ENCODE measurements at regions of chr4 and their contacts with region 1.

Region 1: DNA sequence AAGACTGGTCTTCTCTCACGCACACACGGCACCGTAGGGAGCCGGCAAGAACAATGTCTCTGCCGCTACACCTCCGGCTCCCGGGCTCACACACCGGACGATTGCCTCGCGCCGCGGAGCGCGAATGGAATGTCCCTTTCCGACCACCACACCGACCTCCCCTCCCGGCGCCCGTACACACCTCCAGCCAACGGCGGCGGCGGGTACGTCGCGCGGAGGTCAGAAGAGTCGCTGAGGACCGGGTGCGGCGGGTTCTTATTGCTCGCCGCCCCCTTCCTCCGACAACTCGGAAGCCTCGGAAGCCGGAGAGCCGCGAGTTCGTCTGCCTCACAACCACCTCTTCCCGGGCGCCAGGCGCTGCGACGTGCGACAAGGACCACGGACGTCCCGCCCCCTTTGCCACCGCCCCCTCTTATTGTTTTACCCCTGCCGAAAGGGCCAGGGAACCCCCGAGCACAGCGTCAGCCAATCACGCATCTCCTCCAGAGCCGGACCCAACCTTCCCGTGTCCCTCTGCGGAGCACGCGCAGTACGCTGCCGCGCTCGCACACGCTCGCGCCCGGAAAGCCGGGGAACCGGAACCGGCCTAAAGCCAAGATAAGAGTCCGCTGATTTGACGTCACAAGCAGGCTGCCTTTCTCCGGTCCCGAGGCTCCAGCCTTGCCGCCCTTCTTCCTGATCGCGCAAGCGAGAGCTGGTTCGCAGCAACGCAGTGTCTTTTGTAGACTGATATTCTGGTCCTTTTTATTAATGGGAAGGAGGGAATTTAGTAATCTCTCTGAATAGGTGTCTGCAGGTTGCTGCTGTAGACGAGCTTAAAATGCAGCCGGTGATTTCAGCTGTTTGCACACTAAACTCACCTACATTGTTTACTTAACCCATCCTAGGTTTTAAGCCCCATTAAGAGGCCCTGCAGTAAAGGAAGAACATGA is at the start of gene G3BP2:
- DNase-seq: peak; percentile 97
- H3K4me3 Mint-ChIP-seq: peak within 1 kb of the TSS; percentile 93
- H3K27ac Mint-ChIP-seq: peak within 1 kb of the TSS; percentile 92
- H3K4me1 Mint-ChIP-seq: peaks cover 27% of the 10 kb centered on the region
- H3K27me3 Mint-ChIP-seq: no peaks in the 10 kb centered on the region
- CTCF ChIP-seq: no peak
- total RNA-seq, gene G3BP2: 179 and 231 TPM in 2 replicates

Region 2: DNA sequence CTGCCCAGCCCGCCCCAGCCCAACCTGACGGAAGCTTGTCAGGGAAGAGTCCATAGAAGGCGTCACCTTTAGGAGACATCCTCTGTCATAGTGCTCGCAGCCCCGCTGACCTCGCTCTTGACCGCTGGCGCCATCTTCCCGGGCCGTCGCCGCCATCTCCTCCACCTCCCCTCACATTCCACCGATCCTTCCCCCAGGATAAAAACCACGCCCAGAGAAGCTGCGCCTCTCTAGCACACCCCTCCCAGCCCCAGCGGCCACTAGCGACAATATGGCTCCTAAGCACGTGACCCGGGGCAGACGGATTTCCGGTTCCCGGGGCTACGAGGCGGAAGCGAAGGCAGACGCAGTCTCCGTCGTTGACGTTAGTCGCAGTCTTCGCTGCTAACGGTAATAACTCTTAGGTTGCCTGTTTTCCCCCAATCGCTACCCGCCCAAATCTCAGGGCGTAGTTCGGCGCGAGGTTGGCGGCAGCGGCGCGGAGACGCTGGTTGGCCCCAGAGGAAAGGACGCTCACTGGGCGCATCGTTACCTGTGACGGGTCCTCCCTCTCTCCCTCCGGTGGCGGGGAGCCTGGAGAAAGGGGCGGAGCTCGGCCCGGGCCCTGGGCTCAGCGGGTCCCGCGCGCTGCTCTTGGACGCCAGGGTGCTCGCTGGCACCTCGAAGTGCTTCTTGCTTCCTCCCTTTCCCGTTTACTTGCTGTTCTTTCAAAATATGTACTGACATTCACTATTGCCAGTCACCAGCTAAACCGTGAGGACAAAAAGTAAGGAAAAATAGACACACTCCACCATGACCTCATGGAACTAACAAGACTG is 159.0 kb before region 1 on chr4 and contains the starts of genes RCHY1 and THAP6:
- CTCF ChIA-PET with region 1: no interaction called
- POLR2A ChIA-PET with region 1: interaction called, 43 read pairs
- intact Hi-C with region 1: no loop called
- DNase-seq: peak; percentile 98
- H3K4me3 Mint-ChIP-seq: no peak within 1 kb of the TSS
- H3K27ac Mint-ChIP-seq: no peak within 1 kb of the TSS
- H3K4me1 Mint-ChIP-seq: peaks cover 33% of the 10 kb centered on the region
- H3K27me3 Mint-ChIP-seq: no peaks in the 10 kb centered on the region
- CTCF ChIP-seq: no peak
- total RNA-seq, gene RCHY1: 29.1 and 38.3 TPM in 2 replicates
- total RNA-seq, gene THAP6: 27.6 and 30.0 TPM in 2 replicates

Region 3: DNA sequence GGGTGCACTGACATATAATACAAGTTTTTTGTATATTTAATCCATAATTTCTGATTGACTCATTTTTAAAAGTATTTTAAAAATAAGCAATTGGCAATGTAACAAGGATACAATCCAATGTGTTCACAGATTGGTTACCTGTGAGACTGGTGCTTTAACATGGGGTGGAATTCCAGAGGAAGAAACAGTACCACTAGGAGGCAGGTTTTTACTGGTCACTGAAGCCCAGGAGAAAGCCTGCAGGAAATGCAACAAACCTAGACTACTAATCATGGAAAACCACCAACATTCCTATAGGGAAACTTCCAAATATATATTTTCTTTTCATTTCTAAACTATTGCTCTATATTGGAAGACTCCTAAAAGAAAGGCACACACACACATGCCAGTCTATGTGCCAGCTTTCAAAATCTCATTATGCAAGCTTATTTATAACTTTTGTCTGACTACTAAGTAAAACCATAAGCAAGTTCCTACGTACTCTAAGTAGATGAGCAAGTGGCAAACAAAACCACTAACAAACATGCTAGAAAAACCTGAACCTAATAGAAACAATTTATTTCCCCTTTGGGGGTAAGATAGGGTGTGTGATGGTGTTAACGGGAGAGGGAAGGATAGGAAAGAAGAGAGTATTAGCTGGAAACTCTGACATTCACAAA is 19.3 kb before region 1 on chr4:
- CTCF ChIA-PET with region 1: interaction called, 11 read pairs
- POLR2A ChIA-PET with region 1: interaction called, 24 read pairs
- intact Hi-C with region 1: no loop called
- DNase-seq: peak; percentile 45
- H3K4me3 Mint-ChIP-seq: no peak overlapping the region
- H3K27ac Mint-ChIP-seq: no peak overlapping the region
- H3K4me1 Mint-ChIP-seq: peaks cover 4% of the 10 kb centered on the region
- H3K27me3 Mint-ChIP-seq: no peaks in the 10 kb centered on the region
- CTCF ChIP-seq: peak; percentile 45

Region 4: DNA sequence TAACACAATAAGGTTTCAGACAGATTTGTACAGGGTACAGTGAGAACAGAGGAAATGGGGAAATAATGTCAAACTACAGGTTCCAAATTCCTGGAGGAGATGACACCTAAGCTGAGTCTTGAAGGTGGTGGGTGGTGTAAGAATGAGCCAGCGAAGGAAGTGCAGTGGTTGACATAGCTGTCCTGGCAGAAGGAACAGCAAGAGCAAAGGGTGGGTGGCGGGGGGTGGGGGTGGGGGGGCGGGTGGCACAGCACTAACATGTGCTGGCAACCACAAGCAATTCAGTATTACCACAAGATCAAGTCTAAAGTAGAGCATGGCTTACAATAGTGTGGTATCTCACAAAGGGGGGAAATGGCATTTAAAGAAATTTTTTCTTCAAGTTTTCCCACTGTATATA is 13.1 kb after region 1 on chr4:
- CTCF ChIA-PET with region 1: no interaction called
- POLR2A ChIA-PET with region 1: interaction called, 26 read pairs
- intact Hi-C with region 1: no loop called
- DNase-seq: no peak
- H3K4me3 Mint-ChIP-seq: no peak overlapping the region
- H3K27ac Mint-ChIP-seq: no peak overlapping the region
- H3K4me1 Mint-ChIP-seq: no peaks in the 10 kb centered on the region
- H3K27me3 Mint-ChIP-seq: no peaks in the 10 kb centered on the region
- CTCF ChIP-seq: no peak

Region 5: DNA sequence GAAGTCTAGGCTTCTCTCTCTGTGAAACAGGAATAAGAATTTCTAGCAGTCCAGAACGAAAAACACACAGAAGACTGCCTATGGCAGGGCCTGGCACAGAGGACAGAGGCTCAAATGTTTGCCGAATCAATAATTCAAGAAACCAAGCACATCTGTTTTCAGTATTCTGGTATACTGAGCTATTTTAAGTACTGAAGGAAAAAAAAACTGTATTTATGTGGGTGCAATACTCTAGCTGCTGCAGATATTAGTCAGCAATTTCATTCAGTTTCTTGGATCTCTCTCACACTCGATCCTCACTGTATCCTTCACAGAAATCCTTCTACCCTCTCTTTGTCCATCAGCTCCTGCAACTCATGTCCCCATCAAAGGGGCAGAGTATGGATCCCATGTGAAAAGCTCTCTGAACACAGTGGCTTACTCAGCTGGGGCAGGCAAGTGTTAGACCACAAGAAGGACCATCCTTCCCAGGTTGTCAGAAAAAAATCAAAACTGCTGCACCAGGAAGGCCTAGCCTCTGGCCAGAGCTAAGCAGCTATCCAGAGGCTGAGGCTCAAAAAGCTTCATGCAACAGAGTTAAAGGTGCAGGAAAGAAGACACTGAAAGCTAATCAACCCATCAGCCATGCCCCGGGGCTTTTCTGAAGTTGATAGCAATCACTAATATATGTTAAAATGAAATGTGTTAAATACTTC is 42.0 kb after region 1 on chr4:
- CTCF ChIA-PET with region 1: interaction called, 3 read pairs
- POLR2A ChIA-PET with region 1: interaction called, 19 read pairs
- intact Hi-C with region 1: no loop called
- DNase-seq: no peak
- H3K4me3 Mint-ChIP-seq: no peak overlapping the region
- H3K27ac Mint-ChIP-seq: peak overlapping the region; percentile 31
- H3K4me1 Mint-ChIP-seq: no peaks in the 10 kb centered on the region
- H3K27me3 Mint-ChIP-seq: no peaks in the 10 kb centered on the region
- CTCF ChIP-seq: no peak